ENCODE measurements at regions of chr20 and their contacts with region 1.

Region 1: GRCh38 chr20:51595058-51595532 is 52.6 kb upstream of the NFATC2 start:
- DNase-seq: peak; percentile 77
- H3K4me3 ChIP-seq: no peak overlapping the region
- H3K27ac ChIP-seq: no peak overlapping the region
- H3K27me3 ChIP-seq: no peaks in the 10 kb centered on the region
- CTCF ChIP-seq: peak; percentile 94

Region 2: DNA sequence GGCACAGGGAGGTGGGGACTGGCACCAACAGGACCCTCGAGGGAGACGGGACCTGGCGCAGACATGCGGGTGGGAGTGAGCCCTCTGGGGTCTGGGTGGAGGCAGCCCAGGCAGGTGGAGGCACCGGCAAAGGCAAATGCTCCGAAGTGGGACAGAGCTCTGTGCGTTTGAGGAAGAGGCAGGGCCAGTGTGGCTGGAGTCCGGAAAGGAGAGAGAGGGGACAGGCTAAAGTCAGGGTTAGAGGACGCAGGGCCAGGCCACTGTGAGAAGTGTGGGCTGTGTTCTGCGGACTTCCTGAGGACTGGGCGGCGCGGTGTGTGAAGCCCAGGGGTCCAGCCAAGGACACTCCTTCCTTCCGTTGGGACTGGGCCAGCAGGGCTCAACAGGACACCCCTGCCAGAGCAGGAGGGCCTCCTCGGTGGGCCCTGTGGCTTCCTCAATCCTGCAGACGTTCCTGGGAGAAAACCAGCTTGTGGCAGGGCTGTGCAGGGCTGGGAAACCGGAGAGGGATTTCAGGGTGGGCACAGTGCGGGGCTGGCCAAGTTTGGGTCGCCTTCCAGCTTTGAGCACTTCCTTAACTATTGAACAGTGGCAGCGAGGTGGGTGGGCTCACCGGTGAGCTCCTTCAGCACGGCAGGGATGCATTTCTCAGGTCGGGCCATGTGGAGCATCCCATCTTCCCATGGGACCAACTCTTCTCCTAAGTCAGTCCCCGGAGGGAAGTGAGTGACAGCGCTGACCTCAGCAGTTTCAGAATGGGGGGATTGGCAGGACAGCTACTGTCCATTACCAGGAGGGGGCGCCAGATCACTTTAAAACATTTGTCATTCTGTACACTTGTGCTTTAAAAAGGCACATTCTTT is 614.0 kb before region 1 on chr20:
- CTCF ChIA-PET with region 1: interaction called, 53 read pairs
- POLR2A ChIA-PET with region 1: no interaction called
- DNase-seq: no peak
- H3K4me3 ChIP-seq: no peak overlapping the region
- H3K27ac ChIP-seq: peak overlapping the region; percentile 99
- H3K27me3 ChIP-seq: no peaks in the 10 kb centered on the region
- CTCF ChIP-seq: peak; percentile 83

Region 3: DNA sequence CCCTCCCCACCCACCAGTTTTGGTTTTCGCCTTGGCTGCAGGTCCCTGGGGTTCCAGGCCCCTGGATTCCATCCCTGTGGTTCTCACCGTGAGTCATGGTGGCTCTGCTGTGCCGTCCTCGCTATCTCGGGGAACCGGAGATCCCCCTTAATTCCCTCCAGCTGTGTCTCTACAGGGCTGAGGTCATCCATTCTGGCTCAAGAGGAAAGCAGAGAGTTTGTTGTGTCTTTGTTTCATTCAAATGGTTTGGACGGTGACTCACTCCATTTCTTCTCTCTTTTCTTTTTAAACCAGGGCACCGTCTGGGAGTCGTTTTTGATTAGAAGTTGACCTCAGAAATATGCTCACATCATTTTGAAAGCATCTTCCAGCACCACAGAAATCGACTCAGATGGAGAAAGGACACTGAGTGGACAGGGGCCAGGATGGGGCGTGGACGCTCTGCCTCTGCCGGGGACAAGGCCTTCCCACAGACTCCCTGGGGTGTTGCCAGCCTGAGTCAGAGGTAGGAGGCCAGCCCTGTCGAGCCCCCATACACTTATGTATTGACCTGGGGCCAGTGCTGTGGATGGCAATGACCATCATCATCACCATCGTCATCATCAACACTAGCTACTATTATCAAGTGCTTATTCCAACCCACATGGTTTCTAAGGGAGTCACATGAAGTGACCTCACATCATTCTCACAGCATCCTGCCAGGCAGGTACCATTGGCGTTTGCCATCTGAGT is 228.8 kb before region 1 on chr20:
- CTCF ChIA-PET with region 1: interaction called, 120 read pairs
- POLR2A ChIA-PET with region 1: no interaction called
- DNase-seq: peak; percentile 99
- H3K4me3 ChIP-seq: no peak overlapping the region
- H3K27ac ChIP-seq: peak overlapping the region; percentile 100
- H3K27me3 ChIP-seq: no peaks in the 10 kb centered on the region
- CTCF ChIP-seq: no peak

Region 4: DNA sequence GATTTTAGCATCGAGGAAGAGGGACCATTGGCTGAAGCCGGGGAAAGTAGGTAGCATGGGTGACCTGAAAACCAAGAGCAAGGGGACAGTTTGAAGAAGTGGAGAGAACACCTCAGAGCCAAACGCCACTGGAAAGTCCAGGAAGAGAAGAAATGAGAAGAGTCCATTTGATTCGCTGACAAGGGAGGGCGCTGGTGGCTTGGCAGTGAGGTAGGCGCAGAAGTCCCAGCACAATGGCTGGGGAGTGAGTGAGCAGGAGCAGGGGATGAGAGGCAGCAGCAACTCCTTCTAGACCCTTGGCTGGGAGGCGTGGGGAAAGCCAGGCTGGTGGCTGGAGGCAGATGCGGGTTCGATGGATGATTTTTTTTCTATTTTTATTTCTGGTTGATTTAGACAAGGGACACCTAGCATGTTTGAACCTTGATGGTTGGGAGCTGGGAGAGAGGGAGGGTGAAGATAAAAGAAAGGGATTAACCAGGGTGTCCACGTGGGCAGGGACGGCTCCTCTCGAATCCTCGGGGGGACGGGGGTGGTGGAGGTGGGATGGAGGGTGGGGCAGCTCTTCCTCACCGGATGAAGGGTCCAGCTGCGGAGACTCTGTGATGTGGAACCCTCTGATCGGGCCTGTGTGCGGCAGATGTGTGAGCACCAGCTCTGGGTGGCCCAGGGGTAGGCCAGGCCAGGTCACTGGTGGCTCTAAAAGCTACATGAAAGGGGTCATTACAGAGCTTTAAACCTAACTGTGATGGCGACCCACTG is 216.7 kb before region 1 on chr20:
- CTCF ChIA-PET with region 1: interaction called, 120 read pairs
- POLR2A ChIA-PET with region 1: no interaction called
- DNase-seq: no peak
- H3K4me3 ChIP-seq: no peak overlapping the region
- H3K27ac ChIP-seq: no peak overlapping the region
- H3K27me3 ChIP-seq: no peaks in the 10 kb centered on the region
- CTCF ChIP-seq: no peak

Region 5: DNA sequence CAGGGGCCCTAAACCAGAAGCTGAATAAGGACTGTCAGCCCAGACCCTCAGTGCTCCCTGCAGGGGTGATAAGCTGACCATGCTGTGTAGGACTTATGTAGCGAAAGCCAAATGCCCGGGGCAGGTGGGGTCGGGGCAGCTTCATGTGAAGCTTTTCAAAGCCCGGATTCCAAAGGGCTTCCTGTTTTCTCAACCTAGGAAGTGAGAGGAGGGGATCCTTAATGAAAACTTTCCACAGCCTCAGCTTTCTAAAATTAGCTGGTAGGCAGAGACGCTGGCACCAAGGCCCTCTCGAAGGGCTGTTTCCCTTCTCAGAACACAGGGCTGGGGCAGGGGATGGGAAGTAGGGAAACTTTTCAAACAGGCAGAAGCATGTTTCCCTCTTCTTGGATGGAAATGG is 201.5 kb before region 1 on chr20:
- CTCF ChIA-PET with region 1: interaction called, 14 read pairs
- POLR2A ChIA-PET with region 1: no interaction called
- DNase-seq: no peak
- H3K4me3 ChIP-seq: no peak overlapping the region
- H3K27ac ChIP-seq: no peak overlapping the region
- H3K27me3 ChIP-seq: no peaks in the 10 kb centered on the region
- CTCF ChIP-seq: no peak

Region 6: GRCh38 chr20:51789434-51789833 is 194.3 kb after region 1 on chr20:
- CTCF ChIA-PET with region 1: no interaction called
- POLR2A ChIA-PET with region 1: no interaction called
- DNase-seq: no peak
- H3K4me3 ChIP-seq: no peak overlapping the region
- H3K27ac ChIP-seq: no peak overlapping the region
- H3K27me3 ChIP-seq: no peaks in the 10 kb centered on the region
- CTCF ChIP-seq: no peak

Region 7: DNA sequence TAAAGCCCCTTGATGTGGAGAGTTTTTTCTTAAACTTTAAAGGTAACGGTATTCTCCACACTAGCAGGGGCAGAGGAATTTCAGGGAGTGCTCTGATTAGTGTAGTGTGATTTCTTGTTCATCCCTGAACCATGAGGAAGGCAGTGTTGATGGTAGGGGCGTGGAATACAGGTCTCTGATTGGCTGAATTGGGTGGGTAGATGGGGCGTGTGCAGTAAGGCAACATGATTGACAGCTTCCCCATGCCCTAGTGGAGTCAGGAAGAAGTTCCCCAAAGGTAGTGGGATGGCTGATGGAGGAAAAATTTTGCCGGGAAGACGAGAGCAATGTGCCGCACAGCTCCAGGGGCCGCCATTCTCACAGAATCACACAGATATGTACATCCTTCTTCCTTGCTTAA is 304.6 kb after region 1 on chr20:
- CTCF ChIA-PET with region 1: no interaction called
- POLR2A ChIA-PET with region 1: no interaction called
- DNase-seq: no peak
- H3K4me3 ChIP-seq: no peak overlapping the region
- H3K27ac ChIP-seq: no peak overlapping the region
- H3K27me3 ChIP-seq: no peaks in the 10 kb centered on the region
- CTCF ChIP-seq: no peak

Measured in AG04450 (cell line).